T-cell (primary cell): ENCODE measurements at regions of chr1 and their contacts with region 1.

Region 1: GRCh38 chr1:23539698-23540266 is 8.7 kb upstream of the E2F2 start:
- DNase-seq: peak; percentile 81 to 96 (median 88)
- ATAC-seq: peak; percentile 94 to 98 (median 98)
- H3K4me3 ChIP-seq: no peak overlapping the region
- H3K4me3 Mint-ChIP-seq: peak overlapping the region; percentile 30 to 37 (median 35)
- H3K27ac ChIP-seq: peak overlapping the region; percentile 44
- H3K27ac Mint-ChIP-seq: peak overlapping the region; percentile 72 to 83
- H3K4me1 ChIP-seq: peaks cover 9 to 17% of the 10 kb centered on the region in 2 experiments
- H3K4me1 Mint-ChIP-seq: peaks cover 13 to 31% (median 13%) of the 10 kb centered on the region in 3 donors
- H3K27me3 ChIP-seq: no peaks in the 10 kb centered on the region
- H3K27me3 Mint-ChIP-seq: no peaks in the 10 kb centered on the region

Region 2: GRCh38 chr1:23559136-23559984 is 19.6 kb after region 1 on chr1 and contains the start of gene ID3:
- CTCF ChIA-PET with region 1: interaction called, 3 to 18 read pairs
- POLR2A ChIA-PET with region 1: interaction called in 1 of 2 experiments, 5 read pairs
- DNase-seq: peak; percentile 63 to 95 (median 85)
- ATAC-seq: peak; percentile 65 to 70 (median 68)
- H3K4me3 ChIP-seq: peak within 1 kb of the TSS; percentile 79 to 100
- H3K4me3 Mint-ChIP-seq: peak within 1 kb of the TSS; percentile 85 to 96 (median 95)
- H3K27ac ChIP-seq: peak within 1 kb of the TSS; percentile 64
- H3K27ac Mint-ChIP-seq: peak within 1 kb of the TSS; percentile 87 to 89
- H3K4me1 ChIP-seq: peaks cover 36 to 68% of the 10 kb centered on the region in 2 experiments
- H3K4me1 Mint-ChIP-seq: peaks cover 63 to 75% (median 73%) of the 10 kb centered on the region in 3 donors
- H3K27me3 ChIP-seq: peaks cover 0 to 10% of the 10 kb centered on the region in 2 experiments
- H3K27me3 Mint-ChIP-seq: no peaks in the 10 kb centered on the region
- total RNA-seq, gene ID3: 20.7 to 99.7 (median 81.3) TPM

Region 3: DNA sequence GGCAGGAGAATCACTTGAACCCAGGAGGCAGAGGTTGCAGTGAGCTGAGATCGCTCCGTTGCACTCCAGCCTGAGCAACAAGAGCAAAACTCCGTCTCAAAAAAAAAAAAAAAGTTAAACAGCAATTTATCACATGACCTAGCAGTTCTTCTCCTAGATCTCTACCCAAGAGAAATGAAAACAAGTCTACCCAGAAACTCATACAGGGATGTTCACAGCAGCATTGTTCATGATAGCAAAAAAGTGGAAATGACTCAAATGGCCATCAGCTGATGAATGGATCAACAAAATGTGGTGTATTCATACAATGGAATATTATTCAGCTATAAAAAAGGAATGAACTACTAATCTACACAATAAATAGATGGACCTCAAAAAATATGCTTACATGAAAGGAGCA is 31.7 kb after region 1 on chr1:
- CTCF ChIA-PET with region 1: no interaction called
- POLR2A ChIA-PET with region 1: interaction called in 1 of 2 experiments, 10 read pairs
- DNase-seq: no peak
- ATAC-seq: no peak
- H3K4me3 ChIP-seq: no peak overlapping the region
- H3K4me3 Mint-ChIP-seq: no peak overlapping the region
- H3K27ac ChIP-seq: no peak overlapping the region
- H3K27ac Mint-ChIP-seq: no peak overlapping the region
- H3K4me1 ChIP-seq: peaks cover 11 to 33% of the 10 kb centered on the region in 2 experiments
- H3K4me1 Mint-ChIP-seq: peaks cover 23 to 31% (median 26%) of the 10 kb centered on the region in 3 donors
- H3K27me3 ChIP-seq: peaks cover 0 to 28% of the 10 kb centered on the region in 2 experiments
- H3K27me3 Mint-ChIP-seq: peaks cover 6 to 19% of the 10 kb centered on the region in 2 donors